Panc1 (cell line): ENCODE measurements at regions of chr1 and their contacts with region 1.

Region 1: GRCh38 chr1:27671964-27672749 is at the start of gene IFI6:
- DNase-seq: peak; percentile 85
- ATAC-seq: peak; percentile 97
- H3K4me3 ChIP-seq: peak within 1 kb of the TSS; percentile 50 to 73
- H3K27ac ChIP-seq: peak within 1 kb of the TSS; percentile 73
- H3K4me1 ChIP-seq: peaks cover 7% of the 10 kb centered on the region; the same call in 1 of the 2 replicates
- H3K27me3 ChIP-seq: no peaks in the 10 kb centered on the region
- CTCF ChIP-seq: peak; percentile 52
- total RNA-seq, gene IFI6: 39.1 TPM

Region 2: DNA sequence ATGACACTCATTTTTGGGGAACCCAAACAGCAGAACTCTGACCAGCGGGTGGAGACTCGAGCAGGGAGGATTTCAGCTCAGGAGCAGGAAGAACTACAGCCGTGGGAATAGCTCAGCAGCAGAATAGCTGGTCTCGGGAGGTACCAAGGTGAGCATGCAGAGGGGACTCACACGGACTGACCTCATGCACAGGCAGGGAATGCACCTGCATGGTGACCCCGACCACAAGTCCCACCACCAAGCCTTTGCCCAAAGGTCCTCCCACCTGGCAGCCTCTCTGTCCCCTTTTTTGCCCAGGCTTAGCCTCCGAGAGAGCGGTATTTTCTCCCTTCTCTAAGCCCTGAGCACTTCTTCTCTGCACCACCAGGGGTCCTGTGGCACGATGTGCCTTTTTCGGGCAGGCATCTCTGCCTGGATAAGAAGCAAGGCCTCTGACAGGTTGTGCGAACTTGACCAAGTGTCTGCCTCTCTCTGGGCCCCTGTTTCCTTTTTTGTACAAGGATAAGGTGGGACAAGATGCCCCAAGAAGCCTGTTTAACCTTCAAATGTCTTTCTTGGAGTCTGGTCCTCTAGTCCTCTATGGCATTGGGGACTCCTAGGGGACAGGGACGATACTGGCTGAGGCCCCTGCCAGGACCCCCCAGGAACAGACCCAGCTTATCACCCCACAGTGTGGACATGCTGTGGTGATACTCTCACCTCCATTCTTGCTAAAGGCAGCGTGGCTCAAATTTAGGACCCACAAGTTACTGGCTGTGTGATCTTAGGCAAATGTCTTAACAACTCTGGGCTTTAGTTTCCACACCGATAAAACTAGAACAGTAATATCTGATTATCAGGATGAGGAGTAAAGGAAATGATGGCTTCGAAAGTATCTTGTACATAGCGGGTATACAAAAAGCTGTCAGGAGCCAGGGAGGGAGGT is 28.2 kb before region 1 on chr1:
- CTCF ChIA-PET with region 1: no interaction called
- POLR2A ChIA-PET with region 1: no interaction called
- in situ Hi-C with region 1: no loop called
- intact Hi-C with region 1: no loop called
- DNase-seq: peak; percentile 52
- ATAC-seq: peak; percentile 91
- H3K4me3 ChIP-seq: no peak overlapping the region
- H3K27ac ChIP-seq: no peak overlapping the region
- H3K4me1 ChIP-seq: no peaks in the 10 kb centered on the region
- H3K27me3 ChIP-seq: no peaks in the 10 kb centered on the region
- CTCF ChIP-seq: peak; percentile 90

Region 3: GRCh38 chr1:27656157-27656893 is 15.8 kb before region 1 on chr1:
- CTCF ChIA-PET with region 1: no interaction called
- POLR2A ChIA-PET with region 1: no interaction called
- in situ Hi-C with region 1: no loop called
- intact Hi-C with region 1: no loop called
- DNase-seq: no peak
- ATAC-seq: no peak
- H3K4me3 ChIP-seq: no peak overlapping the region
- H3K27ac ChIP-seq: no peak overlapping the region
- H3K4me1 ChIP-seq: peaks cover 12% of the 10 kb centered on the region
- H3K27me3 ChIP-seq: no peaks in the 10 kb centered on the region
- CTCF ChIP-seq: no peak

Region 4: GRCh38 chr1:27725374-27726173 is 53.4 kb after region 1 on chr1 and contains the start of gene FAM76A:
- CTCF ChIA-PET with region 1: interaction called, 11 read pairs
- POLR2A ChIA-PET with region 1: interaction called, 6 read pairs
- in situ Hi-C with region 1: no loop called
- intact Hi-C with region 1: loop called (anchors 1 kb)
- DNase-seq: peak; percentile 97
- ATAC-seq: peak; percentile 97
- H3K4me3 ChIP-seq: peak within 1 kb of the TSS; percentile 73 to 90
- H3K27ac ChIP-seq: peak within 1 kb of the TSS; percentile 90
- H3K4me1 ChIP-seq: peaks cover 11% of the 10 kb centered on the region; the same call in 1 of the 2 replicates
- H3K27me3 ChIP-seq: no peaks in the 10 kb centered on the region
- CTCF ChIP-seq: peak; percentile 84
- total RNA-seq, gene FAM76A: 15.4 TPM